Head of caudate nucleus (tissue), 42 donors: ENCODE measurements at regions of chr1 and their contacts with region 1.

Region 1: DNA sequence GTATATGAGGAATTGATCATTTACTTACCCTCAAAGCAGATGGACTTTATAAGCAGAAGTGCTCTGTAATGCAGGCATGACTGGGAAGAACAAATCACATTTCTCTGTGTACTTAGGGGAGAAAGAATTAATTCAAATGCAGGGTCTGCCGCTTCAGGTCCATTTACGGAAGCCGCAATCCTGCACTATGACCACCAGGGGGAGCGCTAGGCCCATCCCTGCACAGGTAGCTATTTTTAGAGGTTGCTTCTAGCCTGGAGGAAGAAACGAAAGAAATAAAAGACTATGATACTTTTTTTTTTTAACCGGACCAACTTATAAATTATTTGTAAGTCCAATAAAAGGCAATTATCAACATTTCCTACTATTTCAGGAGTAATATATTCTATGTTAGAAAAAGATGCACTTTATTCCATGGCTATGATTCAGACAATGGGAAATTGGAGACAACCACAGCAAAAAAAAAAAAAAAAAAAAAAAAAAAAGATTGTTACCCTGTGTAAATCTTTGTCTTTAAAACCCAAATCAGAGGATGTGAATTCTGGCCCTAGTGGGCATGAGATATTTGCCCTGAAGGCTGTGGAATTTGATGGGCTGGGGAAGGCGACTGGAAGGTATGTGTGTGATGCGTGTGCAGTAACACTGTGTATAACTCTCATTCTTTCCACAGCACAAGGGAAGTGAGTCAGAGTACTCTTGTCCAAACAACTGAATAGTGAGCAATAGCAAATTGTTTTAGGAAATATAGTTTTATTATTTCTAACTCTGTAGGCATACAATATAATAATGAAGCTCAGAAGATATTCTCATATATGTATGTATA is 12.9 kb upstream of the FYB2 start:
- DNase-seq: peak; percentile 33 to 88 (median 68)

Region 2: DNA sequence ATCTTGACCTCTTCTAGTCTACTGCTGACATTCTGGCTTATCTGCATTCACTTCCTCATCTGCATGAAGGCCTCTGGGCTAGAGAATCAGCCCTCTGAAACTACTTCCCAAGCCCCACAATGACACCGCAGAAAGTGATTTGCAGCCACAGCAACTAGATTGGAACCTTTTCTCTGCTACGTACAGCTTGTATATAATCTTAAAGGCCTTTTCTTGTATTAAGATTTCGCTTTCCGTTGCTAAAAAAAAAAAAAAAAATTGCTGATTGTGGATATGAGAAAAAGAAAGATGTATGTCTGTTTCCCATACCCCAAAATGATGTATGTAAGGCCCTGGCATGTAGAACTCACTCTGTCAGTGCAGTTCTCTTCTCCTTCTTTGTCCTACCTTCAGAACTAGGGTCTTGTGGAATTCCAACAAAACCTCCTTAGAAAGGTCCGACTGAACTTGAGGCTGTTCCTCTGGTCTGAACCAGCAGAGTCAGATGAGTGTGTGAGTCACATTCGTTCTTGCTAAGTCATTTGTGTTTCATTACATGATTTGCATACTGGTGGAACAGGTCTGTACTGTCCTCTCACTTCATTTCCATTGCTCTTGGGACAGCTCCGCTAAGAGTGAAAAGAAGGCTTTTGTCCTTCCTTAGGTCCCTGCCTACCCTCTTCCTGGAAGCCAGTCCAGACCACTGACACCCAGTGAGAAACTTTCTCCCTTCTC is 315.4 kb before region 1 on chr1:
- intact Hi-C with region 1: no loop called
- DNase-seq: peak in 5 of 42 donors; percentile 20 to 54 (median 24)

Region 3: DNA sequence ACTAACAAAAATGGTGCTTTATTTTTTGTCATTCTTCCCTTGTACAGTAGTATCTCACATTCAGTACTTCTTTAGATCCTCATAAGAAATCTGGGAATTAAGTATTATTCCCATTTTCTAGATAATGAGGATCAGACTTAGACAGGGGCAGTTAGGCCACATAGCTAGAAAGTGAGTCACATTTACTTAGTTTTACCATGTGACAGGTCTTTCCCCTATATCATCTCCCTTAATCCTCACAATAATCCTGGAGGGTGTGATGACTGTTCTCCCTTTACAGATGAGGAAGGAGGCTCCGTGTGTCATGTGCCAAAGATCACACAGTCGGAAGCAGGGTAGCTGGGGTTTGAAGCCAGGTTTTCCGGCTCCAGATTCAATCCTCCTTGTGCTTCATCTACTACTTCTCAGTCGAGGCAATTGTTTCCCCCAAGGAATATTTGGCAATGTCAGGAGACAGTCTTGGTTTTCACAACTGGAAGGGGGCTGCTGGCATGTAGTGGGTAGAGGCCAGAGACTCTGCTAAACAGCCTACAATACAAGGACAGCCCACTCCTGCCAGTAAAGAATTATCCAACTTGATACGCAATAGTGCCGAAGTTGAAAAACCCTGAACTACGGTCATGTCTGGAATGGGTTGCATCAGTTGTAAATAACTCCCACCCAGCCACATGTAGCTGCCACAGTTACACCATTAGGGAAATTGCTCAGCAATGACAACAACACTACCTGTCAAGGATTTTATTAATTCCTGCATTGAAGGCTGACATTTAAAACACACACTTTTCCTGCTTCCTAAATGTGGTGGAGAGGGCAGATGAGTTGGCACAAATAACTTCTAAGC is 79.2 kb after region 1 on chr1:
- intact Hi-C with region 1: no loop called
- DNase-seq: no peak

Region 4: DNA sequence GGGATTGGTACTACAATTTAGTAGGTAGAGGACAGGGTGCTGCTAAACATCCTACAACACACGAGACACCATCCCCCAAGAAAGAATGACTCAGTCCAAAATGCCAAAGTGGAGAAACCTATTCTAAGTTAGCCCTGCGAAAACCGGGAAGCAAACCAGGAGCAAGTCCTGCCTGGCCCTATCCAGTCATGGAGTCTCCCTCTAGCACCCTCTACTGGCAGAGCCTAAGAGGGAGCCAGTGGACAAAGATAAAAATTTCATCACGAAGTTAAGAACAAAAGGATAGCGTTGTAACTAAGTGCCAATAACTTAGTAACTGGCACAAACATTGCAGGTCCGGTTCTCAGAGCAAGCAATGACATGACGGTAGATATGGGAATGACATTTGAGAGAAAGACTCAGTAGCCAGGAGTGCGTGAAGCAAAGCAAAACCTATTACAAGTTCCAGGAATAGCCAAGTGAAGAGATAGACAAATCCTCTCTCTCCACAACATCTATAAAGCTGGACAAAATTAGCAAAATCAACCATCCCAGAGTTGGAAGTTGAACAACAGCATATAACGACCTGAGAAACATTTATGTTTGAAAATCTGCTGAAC is 1331.0 kb after region 1 on chr1:
- intact Hi-C with region 1: loop called (anchors 10 kb)
- DNase-seq: peak in 41 of 42 donors; percentile 10 to 84 (median 59)